ENCODE measurements at regions of chr9 and their contacts with region 1.

Region 1: DNA sequence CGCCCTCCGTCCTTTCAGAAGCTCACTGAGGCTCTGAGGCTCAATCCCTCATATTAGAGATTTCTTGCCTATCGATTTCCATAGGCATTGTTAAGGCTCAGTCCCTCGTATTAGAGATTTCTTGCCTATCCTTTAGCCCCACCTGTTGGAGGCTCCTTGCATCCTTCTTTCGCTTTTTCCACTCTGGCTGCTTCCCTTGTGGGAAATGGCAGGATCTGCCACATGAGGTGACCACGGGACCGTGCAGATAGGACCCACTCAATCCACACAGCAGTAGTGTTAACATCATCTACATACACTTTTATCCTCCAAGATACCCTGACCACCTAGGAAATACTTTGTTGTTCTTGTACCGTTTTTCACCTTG is 19.5 kb downstream of the IFT74 start:
- DNase-seq: no peak
- ATAC-seq: no peak
- H3K4me3 ChIP-seq: no peak overlapping the region
- H3K27ac ChIP-seq: no peak overlapping the region
- H3K4me1 ChIP-seq: no peaks in the 10 kb centered on the region
- H3K27me3 ChIP-seq: no peaks in the 10 kb centered on the region
- CTCF ChIP-seq: peak in 4 of 5 experiments; percentile 27 to 62 (median 51)
- POLR2A ChIP-seq: no peak

Region 2: DNA sequence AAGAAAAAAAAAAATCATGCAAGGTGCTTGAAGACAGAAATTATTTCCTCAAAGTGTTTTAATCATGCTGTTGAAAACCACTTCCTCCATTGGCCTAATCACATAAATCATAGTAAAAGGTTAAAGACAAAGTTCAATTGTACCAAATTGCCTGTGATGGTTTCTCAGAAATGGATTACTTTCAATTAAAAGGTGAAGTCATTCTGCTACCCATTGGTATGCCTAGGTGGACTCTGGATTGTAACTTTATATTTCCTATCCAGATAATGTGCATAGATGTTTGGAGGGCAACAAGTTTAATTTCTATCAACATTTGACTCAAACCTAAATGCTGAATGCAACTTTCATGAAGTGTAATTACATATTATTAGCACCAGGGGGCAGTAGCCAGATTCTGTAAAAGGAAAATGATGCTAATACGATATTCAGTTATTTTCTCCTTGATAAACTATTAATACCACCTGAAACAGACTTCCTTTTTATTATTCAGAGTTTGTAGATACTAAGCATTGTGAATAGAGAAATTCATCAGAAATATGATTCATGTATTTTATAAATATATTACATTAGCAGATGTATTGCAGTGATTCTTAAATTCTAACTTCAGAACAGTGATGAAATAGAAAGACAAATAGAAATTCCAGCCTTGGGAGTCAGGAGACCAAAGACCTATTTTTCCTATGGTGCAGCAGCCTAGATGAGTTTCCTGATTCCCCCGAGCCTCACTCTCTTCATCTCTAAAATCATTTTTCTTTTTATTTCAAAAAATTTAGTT is 231.3 kb before region 1 on chr9:
- in situ Hi-C with region 1: loop called (anchors 10 to 25 kb)
- intact Hi-C with region 1: no loop called
- DNase-seq: no peak
- ATAC-seq: no peak
- H3K4me3 ChIP-seq: no peak overlapping the region
- H3K27ac ChIP-seq: no peak overlapping the region
- H3K4me1 ChIP-seq: no peaks in the 10 kb centered on the region
- H3K27me3 ChIP-seq: no peaks in the 10 kb centered on the region
- CTCF ChIP-seq: peak; percentile 26 to 77 (median 41)
- POLR2A ChIP-seq: no peak

Measured in gastrocnemius medialis (tissue), 4 donors.